MCF 10A (cell line): ENCODE measurements at regions of chr9 and their contacts with region 1.

Region 1: DNA sequence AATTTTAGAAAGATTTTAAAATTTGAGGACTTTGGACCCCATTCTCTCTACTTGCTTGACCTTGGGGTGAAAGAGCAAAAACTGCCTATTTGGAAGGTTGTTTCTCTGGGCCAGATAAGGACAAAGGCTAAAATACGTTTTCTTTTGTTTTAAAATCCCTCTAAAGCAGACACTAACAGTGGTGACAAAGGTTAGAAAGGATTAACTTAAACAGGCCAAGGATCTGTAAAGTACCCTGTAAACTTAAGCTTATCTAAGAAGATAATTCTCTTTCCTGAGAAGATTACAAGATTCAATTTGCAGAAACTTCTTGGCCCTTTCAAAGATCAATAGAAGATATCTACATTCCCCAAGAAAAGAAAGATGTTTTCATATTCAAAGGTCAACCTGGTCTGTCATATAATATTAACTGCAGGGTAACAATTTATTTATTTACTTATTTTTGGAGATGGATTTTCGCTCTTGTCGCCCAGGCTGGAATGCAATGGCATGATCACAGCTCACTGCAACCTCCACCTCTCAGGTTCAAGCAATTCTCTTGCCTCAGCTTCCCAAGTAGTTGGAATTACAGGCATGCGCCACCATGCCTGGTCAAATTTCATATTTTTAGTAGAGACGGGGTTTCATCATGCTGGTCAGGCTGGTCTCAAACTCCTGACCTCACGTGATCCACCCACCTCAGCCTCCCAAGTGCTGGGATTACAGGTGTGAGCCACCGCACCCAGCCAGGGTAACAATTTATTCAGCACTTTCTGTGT is 11.9 kb downstream of the TRPM6 start:
- DNase-seq: no peak
- H3K4me3 Mint-ChIP-seq: no peak overlapping the region
- H3K27ac Mint-ChIP-seq: no peak overlapping the region
- H3K4me1 Mint-ChIP-seq: no peaks in the 10 kb centered on the region
- H3K27me3 Mint-ChIP-seq: peaks cover 8% of the 10 kb centered on the region
- CTCF ChIP-seq: no peak

Region 2: GRCh38 chr9:74901001-74901400 is 25.2 kb after region 1 on chr9:
- CTCF ChIA-PET with region 1: no interaction called
- POLR2A ChIA-PET with region 1: no interaction called
- intact Hi-C with region 1: no loop called
- DNase-seq: no peak
- H3K4me3 Mint-ChIP-seq: no peak overlapping the region
- H3K27ac Mint-ChIP-seq: no peak overlapping the region
- H3K4me1 Mint-ChIP-seq: no peaks in the 10 kb centered on the region
- H3K27me3 Mint-ChIP-seq: no peaks in the 10 kb centered on the region
- CTCF ChIP-seq: no peak

Region 3: DNA sequence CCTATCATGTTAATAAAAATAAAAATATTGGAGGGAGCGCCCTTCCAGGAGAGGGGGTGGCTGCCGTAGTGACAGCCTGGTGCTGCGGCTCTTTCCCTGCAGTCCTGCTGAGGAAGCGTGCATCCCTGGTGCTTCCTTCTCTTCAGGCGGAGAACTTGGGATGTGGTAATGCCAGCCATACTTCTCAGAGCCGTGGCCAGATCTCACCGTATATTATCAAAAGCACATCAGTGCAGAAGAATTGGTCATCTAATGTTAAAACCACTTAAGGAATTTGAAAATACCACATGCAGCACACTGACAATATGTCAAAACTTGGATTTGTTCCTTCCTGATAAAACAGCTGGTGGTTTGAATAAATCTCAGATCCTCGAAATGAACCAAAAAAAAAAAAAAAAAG is 59.2 kb after region 1 on chr9:
- CTCF ChIA-PET with region 1: no interaction called
- POLR2A ChIA-PET with region 1: no interaction called
- intact Hi-C with region 1: loop called (anchors 10 kb)
- DNase-seq: no peak
- H3K4me3 Mint-ChIP-seq: no peak overlapping the region
- H3K27ac Mint-ChIP-seq: no peak overlapping the region
- H3K4me1 Mint-ChIP-seq: no peaks in the 10 kb centered on the region
- H3K27me3 Mint-ChIP-seq: no peaks in the 10 kb centered on the region
- CTCF ChIP-seq: no peak